ENCODE measurements at regions of chr17 and their contacts with region 1.

Region 1: GRCh38 chr17:13002766-13003451 is 14.9 kb downstream of the ELAC2 start:
- DNase-seq: peak; percentile 86
- H3K4me3 ChIP-seq: no peak overlapping the region
- H3K27ac ChIP-seq: no peak overlapping the region
- H3K4me1 ChIP-seq: peaks cover 0 to 8% (median 2%) of the 10 kb centered on the region in 4 donors
- H3K27me3 ChIP-seq: no peaks in the 10 kb centered on the region
- CTCF ChIP-seq: peak; percentile 69 to 87 (median 76)
- EP300 ChIP-seq: no peak
- POLR2A ChIP-seq: no peak

Region 2: DNA sequence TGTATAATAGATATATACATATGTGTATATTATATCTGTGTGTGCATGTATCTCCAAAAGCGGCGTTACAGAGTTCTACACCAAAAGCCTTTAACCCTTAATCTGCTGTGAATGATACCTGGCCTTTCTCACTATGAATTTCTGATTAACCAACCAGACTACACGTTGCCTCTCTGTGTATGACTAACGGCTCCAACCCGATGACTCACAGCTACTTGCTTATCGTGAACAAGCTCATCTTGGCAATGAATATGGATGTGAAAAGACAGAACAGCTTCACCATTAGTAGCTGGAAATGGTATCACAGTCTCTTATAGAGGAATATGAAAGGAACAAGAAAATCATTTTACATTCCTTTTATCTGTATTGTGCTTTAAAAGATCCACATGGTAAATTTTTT is 237.4 kb before region 1 on chr17:
- intact Hi-C with region 1: loop called (anchors 10 kb)
- DNase-seq: no peak
- H3K4me3 ChIP-seq: no peak overlapping the region
- H3K27ac ChIP-seq: no peak overlapping the region
- H3K4me1 ChIP-seq: no peaks in the 10 kb centered on the region
- H3K27me3 ChIP-seq: no peaks in the 10 kb centered on the region
- CTCF ChIP-seq: no peak
- EP300 ChIP-seq: no peak
- POLR2A ChIP-seq: no peak